Head of caudate nucleus (tissue), 42 donors: ENCODE measurements at regions of chr6 and their contacts with region 1.

Region 1: GRCh38 chr6:13614926-13615798 is at the start of gene NOL7:
- DNase-seq: peak; percentile 93 to 99 (median 97)

Region 2: DNA sequence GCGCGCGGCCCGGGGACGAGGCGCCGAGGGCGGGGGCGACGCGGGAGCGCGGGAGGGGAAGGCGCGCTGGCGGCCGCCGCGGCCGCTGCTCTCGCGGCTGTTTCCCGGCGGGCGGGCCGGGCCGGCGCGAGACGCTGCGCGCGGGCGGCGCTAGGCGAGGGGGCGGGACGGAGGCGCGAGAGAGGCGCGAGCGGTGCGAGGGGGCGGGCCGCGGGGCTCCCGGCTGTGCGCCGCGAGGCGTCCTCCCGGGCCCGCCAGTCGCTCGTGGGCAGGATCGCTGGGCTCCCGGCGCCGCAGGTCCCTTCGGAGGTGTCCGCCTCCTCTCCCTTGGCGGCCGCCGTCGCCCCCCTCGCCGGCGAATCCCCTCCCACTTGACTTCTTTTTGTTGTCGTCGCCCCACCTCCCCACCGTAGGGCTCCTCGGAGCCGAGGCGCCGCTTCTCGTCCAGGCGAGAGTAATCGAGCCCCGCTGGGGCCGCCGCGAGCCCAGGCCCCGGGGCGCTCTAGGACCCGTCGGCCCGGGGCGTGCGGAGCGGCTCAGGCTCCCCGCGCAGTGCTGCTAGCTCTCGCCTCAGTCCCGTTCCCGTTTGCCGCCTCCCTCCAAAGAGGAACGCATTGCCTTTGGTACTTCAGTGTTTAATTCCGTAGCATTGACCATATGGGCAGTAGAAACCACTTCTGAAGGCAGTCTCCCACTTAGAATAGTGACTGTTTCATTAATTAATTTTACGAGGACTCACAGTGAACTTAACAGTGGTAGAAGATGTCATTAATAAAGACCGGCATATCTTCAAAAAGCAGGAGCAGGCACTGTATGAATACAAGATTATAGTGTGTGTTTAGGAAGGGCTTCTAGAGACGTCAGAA is 96.8 kb after region 1 on chr6 and contains the start of gene RANBP9:
- intact Hi-C with region 1: loop called (anchors 2 kb)
- DNase-seq: peak; percentile 60 to 93 (median 84)

Region 3: DNA sequence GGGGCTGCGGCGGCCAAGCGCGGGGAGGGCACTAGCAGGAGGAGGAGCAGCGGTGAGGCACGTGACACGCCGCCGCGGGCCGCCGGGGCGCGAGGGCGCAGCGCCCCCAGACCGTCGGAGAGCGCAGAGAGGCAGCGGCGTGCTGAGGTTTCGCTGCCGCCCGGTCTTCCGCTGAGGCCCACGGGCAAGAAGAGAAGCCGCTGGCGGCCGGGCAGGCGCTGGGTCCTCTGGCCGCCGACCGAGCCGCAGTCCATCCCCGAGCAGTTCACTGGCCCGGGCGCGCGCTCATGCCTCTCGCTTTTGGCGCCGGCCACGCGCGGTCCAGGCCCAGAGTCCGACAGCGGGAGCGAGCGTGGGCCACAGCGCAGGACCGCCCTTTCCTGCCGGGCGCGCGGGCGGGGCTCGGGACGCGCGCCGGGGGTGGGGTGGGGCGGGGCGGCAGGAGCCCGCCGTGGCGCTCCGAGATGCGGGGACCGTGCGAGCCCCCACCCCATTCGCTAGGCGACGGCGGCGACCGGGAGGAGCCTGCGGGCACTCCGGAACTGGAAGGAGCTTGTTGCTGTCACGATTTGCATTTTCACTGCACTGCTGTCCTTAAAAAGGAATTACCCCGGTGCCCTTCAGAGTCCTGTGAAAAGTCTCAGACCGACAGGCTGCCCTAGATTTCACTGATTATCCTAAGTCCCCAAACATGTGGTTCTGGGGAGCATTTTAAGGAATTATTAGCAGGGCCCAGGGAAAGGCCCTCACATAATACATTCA is 199.2 kb after region 1 on chr6 and contains the start of gene MCUR1:
- intact Hi-C with region 1: loop called (anchors 5 kb)
- DNase-seq: peak; percentile 49 to 94 (median 88)